A549 (cell line): ENCODE measurements at regions of chr5 and their contacts with region 1.

Region 1: GRCh38 chr5:157328277-157328912 is 62.5 kb downstream of the CYFIP2 start:
- DNase-seq: peak; percentile 77 to 89
- ATAC-seq: peak; percentile 97 to 100
- H3K4me3 ChIP-seq: no peak overlapping the region
- H3K27ac ChIP-seq: peak overlapping the region in 1 of 2 experiments; percentile 42; a peak in 1 of 6 replicates
- H3K4me1 ChIP-seq: no peaks in the 10 kb centered on the region
- CTCF ChIP-seq: peak; percentile 95
- EP300 ChIP-seq: no peak
- POLR2A ChIP-seq: no peak
- RAD21 ChIP-seq: peak; percentile 91 to 93

Region 2: GRCh38 chr5:157076558-157076957 is 251.8 kb before region 1 on chr5:
- CTCF ChIA-PET with region 1: no interaction called
- POLR2A ChIA-PET with region 1: no interaction called
- DNase-seq: peak in 1 of 2 experiments; percentile 30
- ATAC-seq: peak; percentile 74 to 77; a peak in 5 of 6 replicates
- H3K4me3 ChIP-seq: no peak overlapping the region
- H3K27ac ChIP-seq: peak overlapping the region in 1 of 2 experiments; percentile 65; a peak in 3 of 6 replicates
- H3K4me1 ChIP-seq: peaks cover 29% of the 10 kb centered on the region
- CTCF ChIP-seq: no peak
- EP300 ChIP-seq: no peak
- POLR2A ChIP-seq: no peak
- RAD21 ChIP-seq: no peak

Region 3: DNA sequence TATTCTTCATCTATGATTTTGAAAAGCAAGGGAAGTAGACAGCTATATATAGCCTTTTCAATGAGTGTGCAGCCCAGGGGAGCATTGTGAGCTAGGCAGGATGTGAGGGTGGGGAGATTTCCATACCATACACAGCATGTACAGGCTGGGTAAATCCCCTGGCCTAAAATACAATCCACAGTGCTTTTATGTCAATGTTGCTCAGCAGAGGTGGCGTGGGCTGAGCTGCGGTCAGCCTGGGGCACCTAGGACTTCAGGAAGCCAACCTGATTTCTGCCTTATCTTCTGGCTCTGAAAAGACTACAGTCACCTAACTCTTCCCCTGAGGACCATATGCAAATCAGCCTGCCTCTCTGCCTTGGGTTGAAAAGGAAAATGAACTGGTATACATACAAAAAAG is 156.0 kb before region 1 on chr5:
- CTCF ChIA-PET with region 1: no interaction called
- POLR2A ChIA-PET with region 1: no interaction called
- DNase-seq: no peak
- ATAC-seq: 0 out of 6 replicates have a peak, but pooled peaks of 1 of the 2 experiments have one; percentile 39
- H3K4me3 ChIP-seq: no peak overlapping the region
- H3K27ac ChIP-seq: no peak overlapping the region
- H3K4me1 ChIP-seq: no peaks in the 10 kb centered on the region
- CTCF ChIP-seq: no peak
- EP300 ChIP-seq: no peak
- POLR2A ChIP-seq: no peak
- RAD21 ChIP-seq: no peak

Region 4: GRCh38 chr5:157253547-157253946 is 74.8 kb before region 1 on chr5:
- CTCF ChIA-PET with region 1: interaction called, 13 read pairs
- POLR2A ChIA-PET with region 1: no interaction called
- DNase-seq: peak; percentile 45 to 69
- ATAC-seq: peak; percentile 66 to 92; a peak in 5 of 6 replicates
- H3K4me3 ChIP-seq: no peak overlapping the region
- H3K27ac ChIP-seq: no peak overlapping the region
- H3K4me1 ChIP-seq: no peaks in the 10 kb centered on the region
- CTCF ChIP-seq: peak; percentile 81
- EP300 ChIP-seq: no peak
- POLR2A ChIP-seq: no peak
- RAD21 ChIP-seq: peak; percentile 85 to 89

Region 5: DNA sequence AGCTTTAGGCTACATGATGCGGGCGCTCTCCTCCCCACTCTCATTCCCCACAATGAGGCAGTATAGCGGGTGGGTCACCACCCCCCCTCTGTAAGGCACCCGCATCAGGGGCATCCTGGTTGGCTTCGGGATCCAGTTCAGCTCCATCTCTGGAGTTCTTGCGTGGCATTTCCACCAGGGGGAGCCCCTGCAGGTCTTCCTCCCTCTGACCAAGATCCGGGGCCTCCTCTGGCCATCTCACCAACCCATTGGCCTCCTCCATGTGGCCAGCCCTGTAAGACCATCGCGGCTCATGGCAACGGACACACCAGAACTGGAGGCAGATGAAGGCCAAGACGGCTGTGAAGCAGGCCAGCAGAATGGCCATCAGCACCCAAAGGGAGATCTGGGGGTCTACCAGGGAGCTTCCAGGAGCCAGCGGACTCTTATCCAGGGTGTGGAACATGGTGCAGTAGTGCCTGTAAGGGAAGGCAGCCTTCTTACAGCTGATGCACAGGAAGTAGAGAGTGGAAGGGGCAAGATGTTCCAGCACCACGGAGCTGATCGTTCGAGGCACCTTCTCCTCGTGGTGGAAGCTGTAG is 14.5 kb after region 1 on chr5:
- CTCF ChIA-PET with region 1: interaction called, 39 read pairs
- POLR2A ChIA-PET with region 1: no interaction called
- DNase-seq: peak; percentile 56 to 71
- ATAC-seq: peak; percentile 75 to 97; a peak in 5 of 6 replicates
- H3K4me3 ChIP-seq: no peak overlapping the region
- H3K27ac ChIP-seq: no peak overlapping the region
- H3K4me1 ChIP-seq: no peaks in the 10 kb centered on the region
- CTCF ChIP-seq: peak; percentile 52
- EP300 ChIP-seq: no peak
- POLR2A ChIP-seq: no peak
- RAD21 ChIP-seq: peak; percentile 53 to 57

Region 6: DNA sequence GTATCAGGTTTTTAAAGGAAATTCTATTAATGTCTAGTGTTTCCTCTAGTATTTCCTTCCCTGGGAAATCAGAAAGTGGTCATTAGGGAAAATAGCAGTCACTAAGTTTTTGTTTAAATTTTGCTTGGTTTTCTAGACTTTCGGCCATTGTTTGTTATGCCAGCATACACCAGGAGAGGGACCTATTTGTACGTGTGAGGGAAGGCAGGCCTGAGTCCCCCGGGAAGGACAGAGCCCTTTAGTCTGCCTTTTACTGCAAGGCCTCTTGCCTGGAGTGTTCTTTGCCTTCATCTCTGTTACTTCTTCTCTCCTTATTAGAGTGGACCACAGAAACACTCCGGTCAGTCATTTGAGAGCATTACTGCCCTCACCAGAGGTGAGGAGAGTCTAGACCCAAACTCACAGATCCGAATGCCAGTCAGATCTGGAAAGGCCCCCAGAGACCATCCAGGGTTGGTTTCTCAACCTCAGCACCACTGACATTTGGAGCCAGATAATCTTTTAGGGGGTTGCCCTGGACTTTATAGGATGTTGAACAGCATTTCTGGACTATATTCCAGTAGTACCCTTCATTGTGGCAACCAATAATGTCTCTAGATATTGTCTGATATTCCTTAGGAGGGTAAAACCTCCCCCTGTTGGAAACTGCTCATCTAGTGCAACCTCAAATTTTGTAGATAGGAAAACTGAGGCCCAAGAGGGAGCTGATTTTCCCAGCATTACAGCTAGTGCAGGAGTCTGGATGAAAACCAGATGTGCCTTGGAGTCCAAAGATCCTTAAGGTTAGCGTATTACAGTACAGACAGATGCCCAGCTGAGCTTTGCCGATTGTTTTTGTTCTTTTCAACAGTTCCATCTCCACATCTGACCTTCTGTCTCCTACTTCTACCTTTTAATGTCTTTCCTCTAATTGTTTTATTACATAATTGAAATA is 38.6 kb after region 1 on chr5:
- CTCF ChIA-PET with region 1: interaction called, 11 read pairs
- POLR2A ChIA-PET with region 1: no interaction called
- DNase-seq: peak; percentile 52 to 74
- ATAC-seq: peak; percentile 76 to 93
- H3K4me3 ChIP-seq: no peak overlapping the region
- H3K27ac ChIP-seq: peak overlapping the region; percentile 1 to 64; a peak in 3 of 6 replicates
- H3K4me1 ChIP-seq: peaks cover 18% of the 10 kb centered on the region
- CTCF ChIP-seq: peak; percentile 59
- EP300 ChIP-seq: no peak
- POLR2A ChIP-seq: no peak
- RAD21 ChIP-seq: peak; percentile 87 to 96

Region 7: GRCh38 chr5:157464519-157465171 is 136.2 kb after region 1 on chr5:
- CTCF ChIA-PET with region 1: interaction called, 32 read pairs
- POLR2A ChIA-PET with region 1: no interaction called
- DNase-seq: peak; percentile 69 to 80
- ATAC-seq: peak; percentile 59 to 75
- H3K4me3 ChIP-seq: 0 out of 3 replicates have a peak overlapping the region, but pooled peaks have one; percentile 6
- H3K27ac ChIP-seq: peak overlapping the region; percentile 77 to 80
- H3K4me1 ChIP-seq: peaks cover 52% of the 10 kb centered on the region
- CTCF ChIP-seq: no peak
- EP300 ChIP-seq: peak in 1 of 2 experiments; percentile 35; a peak in 1 of 5 replicates
- POLR2A ChIP-seq: no peak
- RAD21 ChIP-seq: 0 out of 5 replicates have a peak, but pooled peaks have one; percentile 6 to 14

Region 8: DNA sequence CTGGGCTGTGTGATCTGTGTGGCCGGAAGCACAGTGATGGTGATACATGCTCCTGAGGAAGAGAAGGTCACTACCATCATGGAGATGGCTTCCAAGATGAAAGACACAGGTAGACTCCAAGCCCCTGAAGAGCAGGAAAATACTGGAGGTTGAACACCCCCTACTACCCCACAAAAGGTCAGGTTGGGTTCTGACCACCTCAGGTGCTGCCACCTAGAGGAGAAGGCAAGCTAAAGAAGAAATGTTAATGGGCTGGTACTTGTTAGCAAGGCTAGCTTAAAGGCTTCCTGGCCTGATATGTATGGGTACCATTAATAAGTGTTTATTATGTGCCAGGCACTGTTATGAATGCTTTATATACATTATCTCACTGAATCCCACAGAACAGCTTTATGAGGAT is 143.3 kb after region 1 on chr5:
- CTCF ChIA-PET with region 1: interaction called, 128 read pairs
- POLR2A ChIA-PET with region 1: no interaction called
- DNase-seq: peak; percentile 50 to 51
- ATAC-seq: peak; percentile 23 to 69; a peak in 3 of 6 replicates
- H3K4me3 ChIP-seq: no peak overlapping the region
- H3K27ac ChIP-seq: peak overlapping the region in 1 of 2 experiments; percentile 45; a peak in 2 of 6 replicates
- H3K4me1 ChIP-seq: peaks cover 19% of the 10 kb centered on the region
- CTCF ChIP-seq: peak; percentile 71
- EP300 ChIP-seq: no peak
- POLR2A ChIP-seq: no peak
- RAD21 ChIP-seq: peak; percentile 59 to 64

Region 9: GRCh38 chr5:157718519-157718918 is 390.1 kb after region 1 on chr5:
- CTCF ChIA-PET with region 1: interaction called, 31 read pairs
- POLR2A ChIA-PET with region 1: no interaction called
- DNase-seq: peak; percentile 55 to 56
- ATAC-seq: peak; percentile 85 to 95; a peak in 5 of 6 replicates
- H3K4me3 ChIP-seq: no peak overlapping the region
- H3K27ac ChIP-seq: peak overlapping the region in 1 of 2 experiments; percentile 19; a peak in 1 of 6 replicates
- H3K4me1 ChIP-seq: no peaks in the 10 kb centered on the region
- CTCF ChIP-seq: peak; percentile 71
- EP300 ChIP-seq: no peak
- POLR2A ChIP-seq: no peak
- RAD21 ChIP-seq: peak; percentile 84 to 86